Activated CD4-positive, alpha-beta T cell treated with anti-CD3 and anti-CD28 coated beads for 36 hours (primary cell): ENCODE measurements at regions of chr12 and their contacts with region 1.

Region 1: GRCh38 chr12:46217541-46218321 is 51.1 kb downstream of the SLC38A1 start:
- DNase-seq: peak; percentile 73
- ATAC-seq: no peak
- H3K4me3 Mint-ChIP-seq: peak overlapping the region; percentile 37
- H3K27ac Mint-ChIP-seq: peak overlapping the region; percentile 88
- H3K4me1 Mint-ChIP-seq: peaks cover 95% of the 10 kb centered on the region
- H3K27me3 Mint-ChIP-seq: no peaks in the 10 kb centered on the region

Region 2: GRCh38 chr12:45234139-45234846 is 983.4 kb before region 1 on chr12:
- CTCF ChIA-PET with region 1: no interaction called
- POLR2A ChIA-PET with region 1: no interaction called
- intact Hi-C with region 1: loop called in 1 of 2 experiments (anchors 5 kb)
- DNase-seq: no peak
- ATAC-seq: peak; percentile 60
- H3K4me3 Mint-ChIP-seq: peak overlapping the region; percentile 4
- H3K27ac Mint-ChIP-seq: peak overlapping the region; percentile 85
- H3K4me1 Mint-ChIP-seq: peaks cover 69% of the 10 kb centered on the region
- H3K27me3 Mint-ChIP-seq: no peaks in the 10 kb centered on the region

Region 3: GRCh38 chr12:46230983-46231382 is 13.3 kb after region 1 on chr12:
- CTCF ChIA-PET with region 1: interaction called, 4 read pairs
- POLR2A ChIA-PET with region 1: interaction called, 7 read pairs
- intact Hi-C with region 1: loop called (anchors 1 kb)
- DNase-seq: no peak
- ATAC-seq: peak; percentile 95
- H3K4me3 Mint-ChIP-seq: no peak overlapping the region
- H3K27ac Mint-ChIP-seq: no peak overlapping the region
- H3K4me1 Mint-ChIP-seq: peaks cover 63% of the 10 kb centered on the region
- H3K27me3 Mint-ChIP-seq: no peaks in the 10 kb centered on the region

Region 4: DNA sequence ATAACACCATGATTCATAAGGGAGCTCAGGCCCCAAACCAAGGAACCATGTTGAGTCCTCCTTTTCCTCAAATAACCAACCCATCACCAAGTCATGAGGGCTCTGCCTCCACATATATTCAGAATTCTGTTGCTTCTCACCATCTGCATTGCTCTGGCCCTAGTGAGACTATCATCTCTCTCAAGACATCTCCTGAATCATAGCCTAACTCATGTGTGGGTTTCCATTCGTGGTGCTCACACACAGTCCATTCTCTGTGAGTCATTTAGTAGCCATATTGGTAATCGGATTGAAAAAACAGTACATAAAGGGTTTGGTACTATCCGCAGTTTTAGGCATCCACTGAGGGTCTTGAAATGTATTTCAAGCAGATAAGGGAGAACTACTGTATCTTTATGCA is 159.9 kb after region 1 on chr12:
- CTCF ChIA-PET with region 1: interaction called, 4 read pairs
- POLR2A ChIA-PET with region 1: interaction called, 14 read pairs
- intact Hi-C with region 1: no loop called
- DNase-seq: peak; percentile 51
- ATAC-seq: peak; percentile 76
- H3K4me3 Mint-ChIP-seq: no peak overlapping the region
- H3K27ac Mint-ChIP-seq: peak overlapping the region; percentile 29
- H3K4me1 Mint-ChIP-seq: peaks cover 42% of the 10 kb centered on the region
- H3K27me3 Mint-ChIP-seq: no peaks in the 10 kb centered on the region

Region 5: GRCh38 chr12:47216150-47216677 is 998.5 kb after region 1 on chr12:
- CTCF ChIA-PET with region 1: no interaction called
- POLR2A ChIA-PET with region 1: no interaction called
- intact Hi-C with region 1: loop called in 1 of 2 experiments (anchors 5 kb)
- DNase-seq: peak; percentile 81
- ATAC-seq: peak; percentile 43
- H3K4me3 Mint-ChIP-seq: peak overlapping the region; percentile 89
- H3K27ac Mint-ChIP-seq: peak overlapping the region; percentile 96
- H3K4me1 Mint-ChIP-seq: peaks cover 38% of the 10 kb centered on the region
- H3K27me3 Mint-ChIP-seq: no peaks in the 10 kb centered on the region

Region 6: DNA sequence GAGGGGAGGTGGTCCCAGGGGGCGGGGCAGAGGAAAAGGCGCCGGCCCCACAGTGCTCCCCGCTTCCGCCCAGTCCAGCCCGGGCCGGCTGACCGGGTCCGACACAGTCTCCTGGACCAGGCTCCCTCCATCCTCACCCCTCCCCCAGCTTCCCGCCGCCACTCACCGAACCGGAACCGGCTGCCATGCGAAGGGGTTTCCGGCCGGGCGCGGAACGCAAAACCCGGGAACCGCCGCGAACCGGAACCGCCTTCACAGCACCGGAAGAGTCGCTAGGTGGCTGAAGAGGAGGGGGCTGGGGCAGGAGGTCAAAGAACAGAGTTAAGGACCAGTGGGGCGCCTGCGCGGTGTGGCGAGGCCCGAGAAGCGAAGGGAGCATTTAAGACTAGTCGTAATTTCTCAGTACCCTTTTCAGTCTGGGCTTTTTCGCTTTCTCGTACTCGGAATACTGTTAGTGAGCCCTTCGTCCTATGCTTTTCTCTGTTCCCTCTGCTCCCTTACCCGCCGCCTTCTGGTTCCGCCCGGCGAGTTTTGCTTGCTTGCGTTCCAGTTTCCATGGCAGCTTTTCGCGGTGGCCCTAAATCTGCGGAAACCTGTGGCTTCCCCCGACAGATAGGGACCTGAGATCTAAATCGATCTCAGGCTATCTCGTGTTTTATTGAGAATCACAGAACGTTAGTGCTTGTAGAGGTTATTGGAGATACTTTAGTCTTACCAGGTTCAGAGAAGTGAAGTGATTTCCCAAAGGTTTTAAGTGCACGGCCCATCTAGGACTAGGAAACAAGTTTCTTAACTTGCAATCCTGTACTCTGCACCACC is 1888.3 kb after region 1 on chr12 and contains the start of gene SENP1:
- CTCF ChIA-PET with region 1: no interaction called
- POLR2A ChIA-PET with region 1: no interaction called
- intact Hi-C with region 1: loop called in 1 of 2 experiments (anchors 5 kb)
- DNase-seq: peak; percentile 94
- ATAC-seq: peak; percentile 87
- H3K4me3 Mint-ChIP-seq: peak within 1 kb of the TSS; percentile 95
- H3K27ac Mint-ChIP-seq: peak within 1 kb of the TSS; percentile 98
- H3K4me1 Mint-ChIP-seq: peaks cover 46% of the 10 kb centered on the region
- H3K27me3 Mint-ChIP-seq: no peaks in the 10 kb centered on the region
- total RNA-seq, gene SENP1: 44.4 to 61.8 TPM